CD4-positive, alpha-beta T cell (primary cell): ENCODE measurements at regions of chr14 and their contacts with region 1.

Region 1: GRCh38 chr14:68283378-68284123 is 464.0 kb downstream of the RAD51B start:
- DNase-seq: peak; percentile 47 to 86 (median 66)
- ATAC-seq: peak; percentile 73
- H3K4me3 ChIP-seq: no peak overlapping the region
- H3K4me3 Mint-ChIP-seq: peak overlapping the region; percentile 56
- H3K27ac ChIP-seq: peak overlapping the region; percentile 76 to 88
- H3K27ac Mint-ChIP-seq: peak overlapping the region; percentile 99
- H3K4me1 ChIP-seq: peaks cover 62% of the 10 kb centered on the region
- H3K4me1 Mint-ChIP-seq: peaks cover 94% of the 10 kb centered on the region
- H3K27me3 ChIP-seq: no peaks in the 10 kb centered on the region
- H3K27me3 Mint-ChIP-seq: no peaks in the 10 kb centered on the region
- CTCF ChIP-seq: peak; percentile 23

Region 2: DNA sequence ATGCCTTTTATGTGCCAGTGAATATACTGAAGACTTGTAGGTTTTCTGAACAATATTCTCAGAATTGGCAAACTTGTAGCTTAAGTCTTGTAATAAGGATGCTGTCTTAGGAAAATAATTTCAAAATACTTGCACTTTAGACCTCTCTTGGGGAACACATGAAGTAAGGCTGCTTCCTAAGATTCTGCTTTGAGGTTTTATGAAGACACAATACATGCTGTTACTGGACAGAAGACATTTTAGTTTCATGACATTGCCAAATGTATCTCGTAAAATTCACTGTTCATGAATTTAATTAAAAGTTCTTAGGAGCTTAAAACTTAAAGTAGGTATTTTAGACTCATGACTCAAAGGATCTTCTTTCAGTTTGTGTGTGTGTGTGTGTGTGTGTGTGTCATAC is 383.3 kb before region 1 on chr14:
- CTCF ChIA-PET with region 1: no interaction called
- POLR2A ChIA-PET with region 1: no interaction called
- intact Hi-C with region 1: no loop called
- DNase-seq: no peak
- ATAC-seq: no peak
- H3K4me3 ChIP-seq: no peak overlapping the region
- H3K4me3 Mint-ChIP-seq: no peak overlapping the region
- H3K27ac ChIP-seq: no peak overlapping the region
- H3K27ac Mint-ChIP-seq: no peak overlapping the region
- H3K4me1 ChIP-seq: no peaks in the 10 kb centered on the region
- H3K4me1 Mint-ChIP-seq: peaks cover 4% of the 10 kb centered on the region
- H3K27me3 ChIP-seq: no peaks in the 10 kb centered on the region
- H3K27me3 Mint-ChIP-seq: no peaks in the 10 kb centered on the region
- CTCF ChIP-seq: no peak

Region 3: DNA sequence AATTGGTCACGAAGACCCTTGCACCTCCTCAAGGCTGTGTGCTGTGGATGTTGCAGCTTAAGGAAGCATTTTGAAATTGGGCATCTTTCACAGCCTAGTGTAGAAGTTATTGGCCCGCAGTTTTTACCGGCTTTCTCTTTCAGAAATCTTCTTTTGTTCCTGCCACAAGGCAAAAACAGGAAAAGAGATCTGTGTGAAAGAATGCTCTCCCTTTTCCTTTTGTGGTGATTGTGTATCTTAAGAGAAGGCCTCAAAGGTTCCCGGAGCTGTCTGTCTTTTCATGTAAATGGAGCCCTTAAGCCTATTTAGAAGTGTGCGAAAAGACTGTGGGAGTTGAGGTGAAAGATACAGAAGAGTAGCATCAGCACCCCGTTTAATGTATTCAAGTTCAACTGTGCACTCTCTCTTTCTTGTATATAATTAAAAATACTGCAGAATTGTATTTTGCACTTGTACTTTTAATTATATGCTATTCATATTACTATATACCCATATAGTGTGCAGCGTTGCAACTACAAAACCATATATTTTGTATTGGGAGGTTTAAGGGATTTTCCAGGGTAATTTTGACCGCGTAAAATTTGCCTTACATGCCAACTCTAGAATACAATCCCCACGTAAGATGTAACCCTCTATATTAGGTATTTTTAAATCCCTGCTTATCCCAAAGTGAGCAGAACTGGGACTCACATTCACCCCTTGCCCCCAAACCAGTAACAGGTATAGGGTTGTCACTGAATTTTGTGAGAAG is 22.3 kb before region 1 on chr14:
- CTCF ChIA-PET with region 1: interaction called, 3 read pairs
- POLR2A ChIA-PET with region 1: interaction called, 27 read pairs
- intact Hi-C with region 1: no loop called
- DNase-seq: peak in 4 of 14 experiments; percentile 19 to 23 (median 22)
- ATAC-seq: peak; percentile 55
- H3K4me3 ChIP-seq: no peak overlapping the region
- H3K4me3 Mint-ChIP-seq: peak overlapping the region; percentile 77
- H3K27ac ChIP-seq: peak overlapping the region; percentile 54 to 67
- H3K27ac Mint-ChIP-seq: peak overlapping the region; percentile 79
- H3K4me1 ChIP-seq: peaks cover 37% of the 10 kb centered on the region
- H3K4me1 Mint-ChIP-seq: peaks cover 70% of the 10 kb centered on the region
- H3K27me3 ChIP-seq: no peaks in the 10 kb centered on the region
- H3K27me3 Mint-ChIP-seq: no peaks in the 10 kb centered on the region
- CTCF ChIP-seq: no peak

Region 4: DNA sequence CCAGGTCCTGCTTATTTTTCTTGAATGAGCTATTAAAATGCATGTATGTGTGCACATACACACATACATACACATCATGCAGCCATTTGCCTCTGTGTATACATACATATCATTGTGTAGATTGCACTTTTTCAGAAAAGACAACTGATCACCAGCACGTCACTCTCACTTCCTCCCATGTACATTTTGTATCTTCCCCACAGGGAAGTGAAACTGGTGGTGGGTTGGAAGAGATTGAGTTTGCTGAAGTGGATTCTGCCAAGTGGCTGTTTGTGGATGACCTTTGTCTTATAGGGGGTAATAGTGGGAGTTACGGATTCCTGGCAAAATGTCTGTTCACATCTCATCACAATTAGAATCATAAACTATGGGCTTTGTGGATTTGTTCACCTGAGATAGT is 15.4 kb before region 1 on chr14:
- CTCF ChIA-PET with region 1: no interaction called
- POLR2A ChIA-PET with region 1: interaction called, 4 read pairs
- intact Hi-C with region 1: loop called in 1 of 2 experiments (anchors 1 kb)
- DNase-seq: peak in 3 of 14 experiments; percentile 63 to 69 (median 66)
- ATAC-seq: peak; percentile 64
- H3K4me3 ChIP-seq: no peak overlapping the region
- H3K4me3 Mint-ChIP-seq: peak overlapping the region; percentile 13
- H3K27ac ChIP-seq: peak overlapping the region in 1 of 2 donors; percentile 45
- H3K27ac Mint-ChIP-seq: peak overlapping the region; percentile 77
- H3K4me1 ChIP-seq: peaks cover 22% of the 10 kb centered on the region
- H3K4me1 Mint-ChIP-seq: peaks cover 64% of the 10 kb centered on the region
- H3K27me3 ChIP-seq: no peaks in the 10 kb centered on the region
- H3K27me3 Mint-ChIP-seq: no peaks in the 10 kb centered on the region
- CTCF ChIP-seq: no peak

Region 5: DNA sequence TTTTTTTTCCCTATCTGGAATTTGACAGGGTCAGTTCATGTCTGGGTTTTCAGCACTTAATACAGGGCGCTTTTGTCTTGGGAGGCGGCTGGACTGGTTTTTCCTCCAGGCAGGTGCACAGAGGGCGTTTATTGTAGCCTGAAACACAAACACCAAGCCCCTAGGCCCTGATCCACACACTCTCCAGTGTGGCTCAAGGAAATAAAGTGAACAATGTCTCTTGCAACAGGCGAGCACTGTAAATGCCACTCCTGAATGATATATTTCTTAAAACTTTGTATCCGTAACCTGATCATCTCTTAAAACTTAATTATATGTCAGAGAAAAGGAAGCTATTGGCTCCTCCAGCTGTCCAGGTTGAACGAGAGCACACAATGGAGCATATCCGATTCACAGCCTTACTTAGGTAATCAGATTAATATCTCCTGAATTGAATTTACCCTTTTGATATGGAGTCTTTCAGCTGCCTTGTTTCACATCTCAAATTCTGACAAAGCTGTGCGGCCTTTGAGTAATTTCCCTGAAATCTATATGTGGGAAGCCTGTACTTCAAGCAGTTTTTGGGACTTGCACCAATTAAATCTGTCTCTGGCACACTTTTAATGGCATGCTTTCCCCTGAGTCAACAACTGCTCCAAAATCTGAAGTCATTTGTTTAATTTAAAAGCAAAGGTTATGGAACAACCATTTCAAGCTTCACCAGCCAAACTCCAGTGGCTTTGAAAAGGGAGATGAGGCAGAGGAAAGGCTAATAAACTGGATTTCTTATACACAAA is 23.7 kb after region 1 on chr14:
- CTCF ChIA-PET with region 1: no interaction called
- POLR2A ChIA-PET with region 1: no interaction called
- intact Hi-C with region 1: no loop called
- DNase-seq: no peak
- ATAC-seq: no peak
- H3K4me3 ChIP-seq: no peak overlapping the region
- H3K4me3 Mint-ChIP-seq: no peak overlapping the region
- H3K27ac ChIP-seq: no peak overlapping the region
- H3K27ac Mint-ChIP-seq: no peak overlapping the region
- H3K4me1 ChIP-seq: peaks cover 3% of the 10 kb centered on the region
- H3K4me1 Mint-ChIP-seq: peaks cover 32% of the 10 kb centered on the region
- H3K27me3 ChIP-seq: no peaks in the 10 kb centered on the region
- H3K27me3 Mint-ChIP-seq: no peaks in the 10 kb centered on the region
- CTCF ChIP-seq: no peak

Region 6: DNA sequence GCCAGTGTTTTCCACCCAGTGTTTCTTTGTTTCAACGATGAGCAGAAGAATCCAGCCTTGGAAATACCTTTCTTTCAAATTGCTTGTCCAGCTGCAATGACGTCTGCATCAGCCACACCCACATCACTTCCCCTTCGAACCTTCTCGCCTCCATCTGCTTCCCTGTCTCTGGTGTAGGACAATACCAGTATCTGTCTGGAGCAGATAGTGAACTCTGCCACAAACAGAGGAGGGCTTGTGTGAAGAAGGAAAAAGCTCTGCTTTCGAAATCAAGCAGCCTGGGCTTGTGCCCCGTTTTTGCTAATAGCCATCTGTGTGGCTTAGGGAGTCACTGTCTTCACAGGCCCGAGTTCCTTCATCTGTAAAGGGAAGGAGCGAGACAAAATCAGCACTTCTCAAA is 93.9 kb after region 1 on chr14:
- CTCF ChIA-PET with region 1: interaction called, 3 read pairs
- POLR2A ChIA-PET with region 1: interaction called, 11 read pairs
- intact Hi-C with region 1: loop called in 1 of 2 experiments (anchors 5 kb)
- DNase-seq: peak in 4 of 14 experiments; percentile 26 to 58 (median 52)
- ATAC-seq: no peak
- H3K4me3 ChIP-seq: no peak overlapping the region
- H3K4me3 Mint-ChIP-seq: peak overlapping the region; percentile 27
- H3K27ac ChIP-seq: peak overlapping the region; percentile 11 to 68
- H3K27ac Mint-ChIP-seq: peak overlapping the region; percentile 67
- H3K4me1 ChIP-seq: peaks cover 28% of the 10 kb centered on the region
- H3K4me1 Mint-ChIP-seq: peaks cover 81% of the 10 kb centered on the region
- H3K27me3 ChIP-seq: no peaks in the 10 kb centered on the region
- H3K27me3 Mint-ChIP-seq: no peaks in the 10 kb centered on the region
- CTCF ChIP-seq: no peak

Region 7: GRCh38 chr14:68780358-68781160 is 497.0 kb after region 1 on chr14:
- CTCF ChIA-PET with region 1: no interaction called
- POLR2A ChIA-PET with region 1: interaction called, 27 read pairs
- intact Hi-C with region 1: loop called in 1 of 2 experiments (anchors 10 kb)
- DNase-seq: peak in 9 of 14 experiments; percentile 27 to 77 (median 44)
- ATAC-seq: peak; percentile 36
- H3K4me3 ChIP-seq: peak overlapping the region; percentile 44
- H3K4me3 Mint-ChIP-seq: peak overlapping the region; percentile 79
- H3K27ac ChIP-seq: peak overlapping the region; percentile 56 to 58
- H3K27ac Mint-ChIP-seq: peak overlapping the region; percentile 92
- H3K4me1 ChIP-seq: peaks cover 81% of the 10 kb centered on the region
- H3K4me1 Mint-ChIP-seq: peaks cover 79% of the 10 kb centered on the region
- H3K27me3 ChIP-seq: no peaks in the 10 kb centered on the region
- H3K27me3 Mint-ChIP-seq: no peaks in the 10 kb centered on the region
- CTCF ChIP-seq: no peak

Region 8: GRCh38 chr14:68795597-68796417 is 512.3 kb after region 1 on chr14:
- CTCF ChIA-PET with region 1: interaction called, 4 read pairs
- POLR2A ChIA-PET with region 1: interaction called, 107 read pairs
- intact Hi-C with region 1: no loop called
- DNase-seq: peak; percentile 66 to 95 (median 80)
- ATAC-seq: peak; percentile 43
- H3K4me3 ChIP-seq: peak overlapping the region; percentile 98
- H3K4me3 Mint-ChIP-seq: peak overlapping the region; percentile 92
- H3K27ac ChIP-seq: peak overlapping the region; percentile 100
- H3K27ac Mint-ChIP-seq: peak overlapping the region; percentile 99
- H3K4me1 ChIP-seq: peaks cover 29% of the 10 kb centered on the region
- H3K4me1 Mint-ChIP-seq: peaks cover 49% of the 10 kb centered on the region
- H3K27me3 ChIP-seq: no peaks in the 10 kb centered on the region
- H3K27me3 Mint-ChIP-seq: no peaks in the 10 kb centered on the region
- CTCF ChIP-seq: peak; percentile 77

Region 9: DNA sequence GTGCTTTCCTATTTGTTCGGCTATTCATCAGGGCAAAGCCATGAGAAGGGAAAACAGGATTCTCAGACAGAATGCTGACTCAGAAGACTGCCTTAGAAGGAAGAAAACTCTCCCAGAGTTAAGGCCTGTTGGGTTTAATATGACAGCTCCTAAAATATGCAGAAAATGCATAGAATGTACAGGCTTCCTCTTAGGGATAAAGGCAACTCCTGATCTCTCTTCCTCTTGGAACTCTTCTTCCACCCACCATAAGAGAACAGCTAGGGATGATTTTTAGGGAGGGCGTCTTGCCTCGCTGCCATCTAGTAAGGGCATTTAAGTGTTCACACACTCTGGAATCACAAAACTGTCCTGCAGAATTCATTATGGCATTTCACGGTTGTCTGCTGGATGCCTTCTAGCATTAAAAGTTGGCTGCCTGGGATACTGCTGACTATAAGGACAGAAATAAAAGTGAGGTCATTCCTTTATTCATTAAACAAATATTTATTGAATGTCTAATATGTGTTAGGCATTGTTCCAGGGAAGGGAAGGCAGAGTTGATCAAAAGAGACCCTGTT is 795.7 kb after region 1 on chr14:
- CTCF ChIA-PET with region 1: no interaction called
- POLR2A ChIA-PET with region 1: no interaction called
- intact Hi-C with region 1: no loop called
- DNase-seq: no peak
- ATAC-seq: no peak
- H3K4me3 ChIP-seq: no peak overlapping the region
- H3K4me3 Mint-ChIP-seq: no peak overlapping the region
- H3K27ac ChIP-seq: no peak overlapping the region
- H3K27ac Mint-ChIP-seq: no peak overlapping the region
- H3K4me1 ChIP-seq: no peaks in the 10 kb centered on the region
- H3K4me1 Mint-ChIP-seq: peaks cover 6% of the 10 kb centered on the region
- H3K27me3 ChIP-seq: no peaks in the 10 kb centered on the region
- H3K27me3 Mint-ChIP-seq: no peaks in the 10 kb centered on the region
- CTCF ChIP-seq: no peak